Posterior cingulate gyrus (tissue), 11 donors: ENCODE measurements at regions of chr11 and their contacts with region 1.

Region 1: DNA sequence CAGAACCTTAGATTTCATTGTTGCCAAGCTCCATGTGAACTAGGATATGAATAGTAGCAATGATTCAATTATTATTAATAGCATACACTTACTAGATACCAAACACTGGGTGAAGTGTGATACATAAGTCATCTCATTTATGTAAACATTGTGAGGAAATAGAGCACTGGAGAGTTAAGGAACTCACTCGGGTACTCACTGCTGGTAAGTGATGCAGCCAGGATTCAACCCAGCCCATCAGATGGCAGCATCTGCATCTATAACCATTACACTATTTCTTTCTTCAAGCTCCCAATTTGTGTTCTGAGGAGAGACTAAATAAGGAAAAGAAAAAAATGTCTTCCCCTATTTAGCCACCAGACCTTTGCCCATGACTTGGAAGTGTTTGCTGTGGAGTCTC is 10.2 kb upstream of the ALG8 start:
- DNase-seq: peak in 4 of 10 donors; percentile 27 to 86 (median 40)

Region 2: DNA sequence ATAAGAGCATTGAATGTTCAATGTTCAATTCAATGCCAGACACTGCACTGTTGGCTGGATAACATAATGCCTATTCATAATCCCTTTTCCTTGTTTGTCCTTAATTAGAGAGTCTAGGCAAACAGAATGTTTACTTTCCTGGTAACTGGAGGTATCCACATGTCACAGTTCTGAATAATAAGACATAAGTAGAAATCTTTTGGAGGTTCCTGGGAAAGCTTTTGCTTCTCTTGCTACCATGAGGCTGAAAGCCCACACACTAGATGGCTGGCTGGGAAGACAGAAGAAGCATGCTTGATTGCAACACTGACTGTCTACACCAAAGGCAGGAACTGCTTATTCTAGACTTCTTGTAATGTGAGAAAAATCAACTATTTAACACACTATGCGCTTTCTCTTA is 188.5 kb after region 1 on chr11:
- intact Hi-C with region 1: no loop called
- DNase-seq: no peak

Region 3: GRCh38 chr11:78379039-78379670 is 229.5 kb after region 1 on chr11:
- intact Hi-C with region 1: no loop called
- DNase-seq: no peak

Region 4: GRCh38 chr11:78432058-78432515 is 282.4 kb after region 1 on chr11:
- intact Hi-C with region 1: loop called (anchors 5 kb)
- DNase-seq: peak in 2 of 10 donors; percentile 30 to 66

Region 5: DNA sequence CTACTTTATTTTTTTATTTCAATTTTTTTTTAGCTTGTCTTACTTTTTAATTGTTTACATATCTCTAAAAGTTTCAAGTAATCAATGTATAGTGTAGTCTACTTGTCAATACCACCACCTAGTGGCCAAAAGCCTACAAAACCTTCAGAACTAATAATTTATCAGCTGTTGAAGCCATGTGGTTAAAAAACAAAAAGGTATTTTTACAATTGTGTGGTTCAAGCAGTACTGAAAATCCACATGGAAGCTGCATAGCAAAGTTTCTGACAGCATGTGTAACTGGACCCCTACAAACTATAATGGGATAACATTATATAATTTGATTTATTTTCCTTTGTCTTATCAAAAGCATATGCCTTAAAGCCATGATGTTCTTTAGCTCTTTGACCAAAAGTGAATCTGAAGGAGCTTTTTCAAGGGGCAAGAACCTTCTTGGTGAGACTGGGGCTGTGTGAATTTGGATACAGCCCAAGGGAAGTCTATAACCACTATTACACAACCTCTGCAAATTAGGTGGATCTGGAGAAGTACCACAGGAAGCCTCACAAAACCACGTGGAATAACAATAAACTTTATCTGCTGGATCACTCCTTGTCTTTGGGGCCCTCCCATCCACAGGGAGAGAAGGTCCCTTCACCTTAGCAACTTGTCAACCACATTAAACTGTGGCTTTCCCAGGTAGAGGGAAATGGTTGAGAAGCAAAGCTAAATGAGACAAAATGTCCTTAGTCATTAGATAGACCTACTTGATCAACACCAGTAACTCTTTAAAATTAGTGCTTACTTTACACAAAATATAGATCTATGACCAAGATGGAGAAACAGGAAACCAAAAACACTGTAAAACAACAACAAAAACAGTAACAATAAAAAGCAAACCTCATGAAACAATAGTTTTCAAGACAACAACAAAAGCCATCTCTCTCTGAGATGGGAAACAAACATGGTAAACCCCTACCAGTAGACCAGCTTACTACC is 415.1 kb after region 1 on chr11:
- intact Hi-C with region 1: loop called (anchors 2 kb)
- DNase-seq: peak in 1 of 10 donors; percentile 13